BJ (cell line): ENCODE measurements at regions of chr2 and their contacts with region 1.

Region 1: DNA sequence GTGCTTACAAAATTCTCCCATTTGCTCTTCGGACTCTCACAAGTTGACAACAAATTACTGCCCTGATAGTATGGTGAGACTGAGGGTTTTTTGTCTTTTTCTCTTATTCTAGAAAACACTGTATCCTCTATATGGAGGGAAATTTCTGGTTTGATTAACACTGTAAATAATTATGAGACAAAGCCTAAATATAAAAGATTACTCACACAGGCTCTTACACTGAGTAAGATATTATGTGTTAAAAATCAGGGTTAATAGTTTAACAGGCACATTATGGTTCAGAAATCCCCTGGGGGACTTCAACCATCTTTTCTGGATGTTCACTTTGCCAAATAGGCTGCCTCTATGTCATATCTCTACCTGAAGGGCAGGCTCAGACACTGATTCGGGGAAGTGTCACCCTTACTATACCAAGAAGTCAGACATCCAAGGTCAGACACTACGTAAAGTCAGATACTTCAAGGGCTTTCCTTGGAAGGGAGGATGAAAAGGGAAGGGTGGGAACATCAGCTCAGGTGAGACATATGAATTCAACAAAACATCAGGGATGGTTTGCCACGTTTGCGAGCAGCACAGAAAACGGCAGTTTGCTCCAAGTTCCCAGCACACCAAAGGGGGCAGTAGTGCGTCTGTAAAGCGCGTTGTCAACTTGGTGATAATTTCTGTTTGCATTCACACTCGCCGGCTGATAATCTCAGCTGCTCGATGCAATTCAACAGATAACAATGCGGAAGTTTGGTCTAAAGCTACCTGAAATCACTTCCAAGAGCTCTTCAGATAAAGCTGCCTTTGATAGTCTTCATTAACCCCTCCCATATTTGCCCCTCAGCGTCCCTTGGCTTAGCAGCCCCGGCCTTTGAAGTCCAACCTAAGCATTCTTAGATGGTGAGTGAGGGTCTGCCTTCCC is 972 bp upstream of the RASGRP3 start:
- DNase-seq: peak; percentile 29
- H3K4me3 ChIP-seq: peak overlapping the region; percentile 59
- H3K27me3 ChIP-seq: no peaks in the 10 kb centered on the region
- CTCF ChIP-seq: peak; percentile 87

Region 2: DNA sequence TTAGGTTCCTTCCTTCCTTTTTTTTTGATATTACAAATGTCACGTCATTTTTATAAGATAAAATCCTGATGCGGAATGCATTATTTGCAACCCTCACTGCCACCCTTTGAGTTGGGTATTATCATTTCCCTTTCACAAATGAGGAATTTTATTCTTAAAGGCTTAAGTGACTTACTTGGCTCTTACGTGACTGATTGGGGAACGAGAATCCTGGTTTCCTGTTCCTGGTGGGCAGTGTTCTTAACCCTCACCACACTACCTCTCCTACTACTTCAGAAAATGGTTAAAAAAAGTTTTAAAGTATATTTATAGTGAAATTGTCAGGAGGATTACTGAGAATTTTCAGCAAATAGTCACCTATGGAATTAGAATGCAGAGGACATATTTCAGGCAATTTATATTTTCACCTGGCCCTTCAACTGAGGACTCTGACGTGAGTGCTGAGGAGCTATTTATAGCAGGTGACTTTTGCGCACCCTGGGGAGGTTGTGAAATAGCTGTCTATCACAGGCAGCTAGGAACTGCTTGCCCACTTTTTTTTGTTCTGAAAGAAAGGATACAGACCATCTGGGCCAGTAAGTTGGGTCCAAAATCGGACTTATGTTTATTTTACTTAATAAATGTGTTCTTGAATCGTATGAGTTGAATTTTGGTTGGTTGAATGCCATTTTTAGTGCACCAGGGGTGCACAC is 17.8 kb before region 1 on chr2:
- CTCF ChIA-PET with region 1: interaction called, 20 read pairs
- POLR2A ChIA-PET with region 1: no interaction called
- DNase-seq: no peak
- H3K4me3 ChIP-seq: no peak overlapping the region
- H3K27me3 ChIP-seq: no peaks in the 10 kb centered on the region
- CTCF ChIP-seq: no peak

Region 3: GRCh38 chr2:33746208-33746800 is 270.8 kb after region 1 on chr2:
- CTCF ChIA-PET with region 1: no interaction called
- POLR2A ChIA-PET with region 1: no interaction called
- DNase-seq: no peak
- H3K4me3 ChIP-seq: no peak overlapping the region
- H3K27me3 ChIP-seq: no peaks in the 10 kb centered on the region
- CTCF ChIP-seq: no peak